ENCODE measurements at regions of chr15 and their contacts with region 1.

Region 1: GRCh38 chr15:45037936-45038335 is 14.9 kb downstream of the SORD start:
- DNase-seq: no peak
- H3K4me3 ChIP-seq: no peak overlapping the region
- H3K27ac ChIP-seq: no peak overlapping the region
- H3K4me1 ChIP-seq: no peaks in the 10 kb centered on the region
- CTCF ChIP-seq: no peak

Region 2: GRCh38 chr15:44968475-44968874 is 69.5 kb before region 1 on chr15:
- CTCF ChIA-PET with region 1: no interaction called
- POLR2A ChIA-PET with region 1: interaction called, 3 read pairs
- intact Hi-C with region 1: loop called (anchors 5 kb)
- DNase-seq: no peak
- H3K4me3 ChIP-seq: no peak overlapping the region
- H3K27ac ChIP-seq: no peak overlapping the region
- H3K4me1 ChIP-seq: no peaks in the 10 kb centered on the region
- CTCF ChIP-seq: no peak